ENCODE measurements at regions of chr7 and their contacts with region 1.

Region 1: DNA sequence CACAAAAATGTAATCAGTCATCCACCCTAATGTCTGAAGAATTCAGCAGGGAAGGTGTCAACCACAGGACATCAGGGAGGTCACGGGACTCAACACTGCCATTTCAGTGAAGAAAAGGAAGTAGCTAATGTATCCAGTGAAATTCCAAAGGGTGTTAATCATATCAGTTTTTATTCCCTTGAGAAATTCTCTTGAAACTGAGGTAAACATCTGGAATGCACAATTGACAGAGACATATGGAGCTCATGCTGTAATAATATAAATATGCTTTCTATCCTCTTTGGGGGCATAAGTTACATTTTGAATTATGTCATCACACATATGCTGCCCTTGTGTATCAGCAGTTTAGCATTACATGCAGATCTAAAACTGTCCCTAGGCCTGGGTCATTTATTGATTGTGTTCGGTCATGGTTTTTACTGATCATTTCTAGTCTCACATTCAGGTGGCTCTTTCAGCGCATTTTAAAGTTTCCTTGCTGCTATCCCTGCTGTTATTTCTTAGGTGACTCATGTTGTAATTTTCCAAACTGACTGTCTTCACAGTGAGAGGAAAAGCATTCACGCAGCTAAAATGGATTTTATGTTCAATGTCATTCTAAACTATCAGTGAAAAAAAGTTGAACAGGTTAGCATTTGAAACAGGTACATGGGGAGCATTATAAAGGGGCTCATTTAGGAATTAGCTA is 273.9 kb downstream of the TSPAN12 start:
- DNase-seq: peak; percentile 3
- ATAC-seq: no peak; the same call in 1 of the 2 replicates
- H3K4me3 ChIP-seq: no peak overlapping the region
- H3K27ac ChIP-seq: no peak overlapping the region
- H3K4me1 ChIP-seq: no peaks in the 10 kb centered on the region
- H3K27me3 ChIP-seq: no peaks in the 10 kb centered on the region
- CTCF ChIP-seq: no peak

Region 2: DNA sequence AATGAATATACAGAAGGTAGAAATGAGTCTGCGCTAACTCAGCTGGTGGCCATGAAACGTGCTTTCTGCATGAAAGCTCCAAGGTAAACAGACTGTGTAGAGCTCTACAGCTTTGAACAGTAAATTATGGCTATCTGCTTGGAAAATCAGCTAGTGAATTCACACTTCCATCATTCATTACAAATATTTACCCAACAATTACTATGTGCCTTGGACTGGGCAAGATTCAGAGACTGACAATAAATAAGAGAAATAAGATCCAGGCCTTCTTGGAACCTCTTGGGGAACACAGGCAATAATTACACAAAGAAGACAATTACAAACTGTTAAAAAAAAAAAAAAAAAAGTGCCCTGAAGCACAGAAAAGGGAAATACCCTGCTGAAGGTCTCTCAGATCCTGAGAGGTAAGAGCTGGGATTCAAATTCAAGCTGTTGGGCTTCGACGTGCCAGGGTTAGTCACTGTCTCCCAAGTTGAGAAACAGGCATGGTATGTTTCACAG is 258.1 kb after region 1 on chr7:
- CTCF ChIA-PET with region 1: interaction called, 10 read pairs
- POLR2A ChIA-PET with region 1: no interaction called
- intact Hi-C with region 1: no loop called
- DNase-seq: no peak
- ATAC-seq: no peak
- H3K4me3 ChIP-seq: no peak overlapping the region
- H3K27ac ChIP-seq: no peak overlapping the region
- H3K4me1 ChIP-seq: no peaks in the 10 kb centered on the region
- H3K27me3 ChIP-seq: no peaks in the 10 kb centered on the region
- CTCF ChIP-seq: no peak